H1 (cell line): ENCODE measurements at regions of chr22 and their contacts with region 1.

Region 1: DNA sequence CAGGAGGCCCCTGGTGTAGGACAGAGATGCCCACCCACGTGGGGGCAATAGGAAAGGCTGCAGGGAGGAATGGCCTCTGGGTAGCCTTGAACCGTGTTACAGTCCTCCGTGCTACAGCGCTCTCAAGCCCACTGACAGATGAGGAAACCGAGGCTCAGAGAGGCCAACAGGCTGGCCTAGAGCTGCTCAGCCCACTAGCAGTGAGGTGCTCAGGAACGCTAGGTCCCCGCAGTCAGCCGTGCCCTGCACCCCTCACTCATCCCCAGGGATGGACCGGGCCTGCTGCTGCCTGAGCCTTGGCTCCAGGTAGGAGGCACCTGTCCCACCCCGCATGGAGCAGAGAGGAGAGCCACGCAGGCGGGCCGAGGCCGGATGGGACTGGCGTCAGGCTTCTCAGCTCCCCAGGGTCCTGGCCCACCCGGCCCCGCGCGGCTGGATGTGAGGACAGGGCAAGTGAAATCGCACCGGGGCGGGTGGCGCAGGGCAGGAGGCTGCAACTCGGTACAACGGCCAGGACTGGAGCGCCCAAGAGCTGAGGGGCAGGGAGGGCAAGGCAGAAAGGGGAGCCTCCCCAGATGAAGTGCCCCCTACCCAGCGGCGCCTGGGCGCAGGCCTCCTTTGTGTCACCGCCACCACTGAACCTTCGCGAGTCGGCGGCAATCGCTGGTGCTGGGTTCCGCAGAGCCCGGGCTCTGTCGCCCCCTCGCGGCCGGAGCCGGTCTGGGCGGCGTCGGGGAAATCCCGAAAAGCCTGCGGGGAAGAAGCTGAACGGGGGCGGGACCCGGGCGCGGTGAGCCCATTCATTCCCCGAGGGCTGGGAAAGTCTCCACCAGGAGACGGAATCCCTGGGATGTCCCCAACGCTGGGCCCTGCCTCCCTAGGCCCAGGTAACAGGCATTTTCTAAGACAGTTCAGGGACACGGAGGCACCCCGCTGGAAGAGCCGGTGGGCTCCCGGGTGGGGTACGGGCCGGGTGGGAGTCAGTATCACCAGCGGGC is 8.4 kb upstream of the SLC2A11 start:
- DNase-seq: peak; percentile 61 to 100
- H3K4me3 ChIP-seq: no peak overlapping the region
- H3K27ac ChIP-seq: no peak overlapping the region
- H3K4me1 ChIP-seq: peaks cover 0 to 28% (median 19%) of the 10 kb centered on the region in 4 experiments; a peak in 6 of 7 replicates
- H3K27me3 ChIP-seq: peaks cover 0 to 5% (median 1%) of the 10 kb centered on the region in 4 experiments; a peak in 3 of 7 replicates
- CTCF ChIP-seq: peak; percentile 78 to 97 (median 93)
- EP300 ChIP-seq: 0 out of 3 replicates have a peak, but pooled peaks of 1 of the 2 experiments have one; percentile 59
- POLR2A ChIP-seq: no peak
- RAD21 ChIP-seq: peak; percentile 96 to 98

Region 2: GRCh38 chr22:23767673-23768548 is 81.4 kb before region 1 on chr22 and contains the start of gene CHCHD10:
- CTCF ChIA-PET with region 1: interaction called, 73 read pairs
- POLR2A ChIA-PET with region 1: interaction called, 19 read pairs
- DNase-seq: peak in 1 of 2 experiments; percentile 96
- H3K4me3 ChIP-seq: peak within 1 kb of the TSS; percentile 63 to 96 (median 74)
- H3K27ac ChIP-seq: no peak within 1 kb of the TSS; the same call in 1 of the 2 replicates
- H3K4me1 ChIP-seq: peaks cover 0 to 27% (median 20%) of the 10 kb centered on the region in 4 experiments; a peak in 6 of 7 replicates
- H3K27me3 ChIP-seq: peaks cover 0 to 14% (median 9%) of the 10 kb centered on the region in 4 experiments; a peak in 6 of 7 replicates
- CTCF ChIP-seq: peak; percentile 78 to 86 (median 85)
- EP300 ChIP-seq: no peak
- POLR2A ChIP-seq: 0 out of 3 replicates have a peak, but pooled peaks of 1 of the 2 experiments have one; percentile 43
- RAD21 ChIP-seq: peak; percentile 58 to 70
- total RNA-seq, gene CHCHD10: 94.5 and 104 TPM in 2 replicates

Region 3: GRCh38 chr22:23777786-23778576 is 71.3 kb before region 1 on chr22:
- CTCF ChIA-PET with region 1: interaction called, 73 read pairs
- POLR2A ChIA-PET with region 1: interaction called, 4 read pairs
- DNase-seq: no peak
- H3K4me3 ChIP-seq: no peak overlapping the region
- H3K27ac ChIP-seq: no peak overlapping the region
- H3K4me1 ChIP-seq: peaks cover 0 to 11% (median 4%) of the 10 kb centered on the region in 4 experiments; a peak in 3 of 7 replicates
- H3K27me3 ChIP-seq: peaks cover 0 to 19% (median 12%) of the 10 kb centered on the region in 4 experiments; a peak in 5 of 7 replicates
- CTCF ChIP-seq: no peak
- EP300 ChIP-seq: no peak
- POLR2A ChIP-seq: no peak
- RAD21 ChIP-seq: no peak

Region 4: GRCh38 chr22:23786752-23787599 is 62.3 kb before region 1 on chr22 and contains the start of gene SMARCB1:
- CTCF ChIA-PET with region 1: interaction called, 13 read pairs
- POLR2A ChIA-PET with region 1: interaction called, 5 read pairs
- DNase-seq: peak in 1 of 2 experiments; percentile 95
- H3K4me3 ChIP-seq: peak within 1 kb of the TSS; percentile 79 to 87 (median 82)
- H3K27ac ChIP-seq: peak within 1 kb of the TSS; percentile 98
- H3K4me1 ChIP-seq: peaks cover 0 to 10% (median 4%) of the 10 kb centered on the region in 4 experiments; a peak in 6 of 7 replicates
- H3K27me3 ChIP-seq: no peaks in the 10 kb centered on the region
- CTCF ChIP-seq: no peak
- EP300 ChIP-seq: no peak
- POLR2A ChIP-seq: peak in 1 of 2 experiments; percentile 96; a peak in 2 of 3 replicates
- RAD21 ChIP-seq: peak in 1 of 2 experiments; percentile 11; a peak in 1 of 4 replicates
- total RNA-seq, gene SMARCB1: 116 and 124 TPM in 2 replicates

Region 5: DNA sequence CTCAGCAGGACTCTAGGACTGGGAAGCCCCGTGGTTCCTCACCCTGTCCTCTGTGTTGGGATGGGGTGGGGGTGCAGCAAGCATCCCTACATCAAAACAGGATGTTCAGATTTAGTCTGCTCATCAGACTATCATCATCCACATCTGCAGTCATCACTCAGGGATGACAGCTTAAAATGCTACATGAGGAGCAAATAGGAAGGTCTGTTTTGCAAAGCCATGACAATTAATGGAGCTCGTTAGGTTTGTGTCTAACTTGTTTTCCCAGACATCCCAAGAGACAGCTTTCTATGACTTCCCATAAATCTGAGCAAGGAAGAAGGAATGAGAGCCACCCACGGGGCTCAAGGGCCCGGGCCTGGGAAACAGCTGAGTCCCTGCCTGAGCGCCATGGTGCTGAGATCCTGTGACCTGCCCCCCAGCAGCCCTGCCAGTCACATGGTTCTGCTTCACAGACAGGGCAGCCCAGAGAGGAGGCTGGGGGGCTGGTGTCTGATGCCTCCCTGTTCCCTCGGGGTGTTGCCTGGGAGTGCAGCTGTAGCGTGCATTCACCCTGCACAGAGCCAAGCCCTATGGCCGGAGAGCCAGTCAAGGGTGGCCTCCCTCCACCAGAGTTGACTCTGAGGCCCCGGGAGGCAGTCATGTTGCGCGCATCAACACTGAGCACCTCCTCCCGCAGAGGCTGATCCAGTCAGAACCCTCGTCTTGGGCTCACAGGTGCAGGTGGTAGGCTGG is 22.7 kb before region 1 on chr22:
- CTCF ChIA-PET with region 1: interaction called, 14 read pairs
- POLR2A ChIA-PET with region 1: interaction called, 4 read pairs
- DNase-seq: no peak
- H3K4me3 ChIP-seq: no peak overlapping the region
- H3K27ac ChIP-seq: no peak overlapping the region; the same call in 1 of the 2 replicates
- H3K4me1 ChIP-seq: no peaks in the 10 kb centered on the region
- H3K27me3 ChIP-seq: no peaks in the 10 kb centered on the region; a peak in 1 of 7 replicates
- CTCF ChIP-seq: no peak
- EP300 ChIP-seq: no peak
- POLR2A ChIP-seq: no peak
- RAD21 ChIP-seq: no peak

Region 6: GRCh38 chr22:23834798-23835483 is 14.4 kb before region 1 on chr22:
- CTCF ChIA-PET with region 1: interaction called, 12 read pairs
- POLR2A ChIA-PET with region 1: interaction called, 7 read pairs
- DNase-seq: no peak
- H3K4me3 ChIP-seq: no peak overlapping the region
- H3K27ac ChIP-seq: no peak overlapping the region
- H3K4me1 ChIP-seq: peaks cover 0 to 8% (median 6%) of the 10 kb centered on the region in 4 experiments; a peak in 5 of 7 replicates
- H3K27me3 ChIP-seq: peaks cover 0 to 2% (median 0%) of the 10 kb centered on the region in 4 experiments; a peak in 2 of 7 replicates
- CTCF ChIP-seq: no peak
- EP300 ChIP-seq: no peak
- POLR2A ChIP-seq: no peak
- RAD21 ChIP-seq: no peak